Ascending aorta (tissue), 2 donors: ENCODE measurements at regions of chr12 and their contacts with region 1.

Region 1: DNA sequence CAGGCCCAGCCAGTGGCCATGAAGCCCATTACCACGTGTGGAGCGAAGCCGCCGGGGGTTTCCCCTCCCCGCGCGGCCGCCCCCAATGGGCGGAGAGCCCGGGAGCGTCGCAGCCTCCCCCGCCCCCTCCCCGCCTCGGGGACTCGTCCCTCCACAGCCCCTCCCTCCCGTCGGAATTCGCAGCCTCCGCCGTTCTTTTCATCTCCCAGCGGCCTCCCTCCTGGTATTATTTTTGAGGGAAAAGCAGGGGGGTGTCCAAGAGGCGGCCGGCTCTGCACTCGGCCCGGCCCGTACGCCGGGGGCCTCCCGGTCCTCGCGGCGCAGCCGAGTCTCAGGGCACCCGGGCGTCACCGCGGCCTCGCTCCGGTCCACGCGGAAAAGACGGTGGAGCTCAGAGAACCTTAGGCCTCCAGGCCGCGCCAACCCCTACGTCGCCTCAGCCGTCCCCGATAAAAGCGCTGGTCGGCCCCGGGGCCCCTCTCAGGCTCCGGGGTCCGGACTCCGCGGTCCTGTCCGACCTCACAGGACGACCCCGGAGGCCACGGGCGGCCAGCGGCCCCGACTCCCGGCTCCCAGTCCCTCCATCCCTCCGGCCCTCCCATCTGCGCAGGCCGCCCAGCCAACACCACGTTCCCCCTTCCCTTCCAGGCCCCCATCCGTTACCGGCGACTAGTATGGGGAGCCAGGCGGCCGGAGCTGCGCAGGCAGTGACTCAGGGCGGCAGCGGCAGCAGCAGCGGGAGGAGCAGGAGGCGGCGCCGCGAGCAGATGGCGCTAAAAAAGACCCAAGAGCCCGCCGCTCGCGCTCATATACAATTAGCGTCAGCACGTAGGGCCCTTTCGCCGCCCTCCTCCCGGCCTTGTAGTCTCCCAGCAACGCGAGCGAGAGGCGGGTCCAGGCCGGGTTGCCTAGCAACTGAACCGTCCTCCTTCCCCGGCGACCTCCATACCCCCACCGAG is at the start of gene NAP1L1:
- DNase-seq: peak; percentile 92 to 99
- H3K4me3 ChIP-seq: peak within 1 kb of the TSS; percentile 71 to 77
- H3K27ac ChIP-seq: peak within 1 kb of the TSS; percentile 99
- H3K4me1 ChIP-seq: peaks cover 7 to 18% of the 10 kb centered on the region in 2 donors
- H3K27me3 ChIP-seq: no peaks in the 10 kb centered on the region
- CTCF ChIP-seq: no peak
- total RNA-seq, gene NAP1L1: 116 TPM

Region 2: GRCh38 chr12:75511116-75512048 is 572.8 kb before region 1 on chr12 and contains the start of gene KRR1:
- intact Hi-C with region 1: loop called (anchors 5 kb)
- DNase-seq: peak; percentile 68 to 96
- H3K4me3 ChIP-seq: peak within 1 kb of the TSS; percentile 87 to 90
- H3K27ac ChIP-seq: peak within 1 kb of the TSS; percentile 73 to 81
- H3K4me1 ChIP-seq: peaks cover 3 to 12% of the 10 kb centered on the region in 2 donors
- H3K27me3 ChIP-seq: no peaks in the 10 kb centered on the region
- CTCF ChIP-seq: no peak
- total RNA-seq, gene KRR1: 23.9 TPM

Region 3: GRCh38 chr12:76031537-76032073 is 52.6 kb before region 1 on chr12 and contains the start of gene PHLDA1:
- intact Hi-C with region 1: loop called (anchors 1 kb)
- DNase-seq: peak; percentile 69 to 97
- H3K4me3 ChIP-seq: peak within 1 kb of the TSS; percentile 58 to 80
- H3K27ac ChIP-seq: peak within 1 kb of the TSS; percentile 95
- H3K4me1 ChIP-seq: no peaks in the 10 kb centered on the region
- H3K27me3 ChIP-seq: no peaks in the 10 kb centered on the region
- CTCF ChIP-seq: peak; percentile 64 to 74 (median 69)
- total RNA-seq, gene PHLDA1: 11.8 TPM

Region 4: DNA sequence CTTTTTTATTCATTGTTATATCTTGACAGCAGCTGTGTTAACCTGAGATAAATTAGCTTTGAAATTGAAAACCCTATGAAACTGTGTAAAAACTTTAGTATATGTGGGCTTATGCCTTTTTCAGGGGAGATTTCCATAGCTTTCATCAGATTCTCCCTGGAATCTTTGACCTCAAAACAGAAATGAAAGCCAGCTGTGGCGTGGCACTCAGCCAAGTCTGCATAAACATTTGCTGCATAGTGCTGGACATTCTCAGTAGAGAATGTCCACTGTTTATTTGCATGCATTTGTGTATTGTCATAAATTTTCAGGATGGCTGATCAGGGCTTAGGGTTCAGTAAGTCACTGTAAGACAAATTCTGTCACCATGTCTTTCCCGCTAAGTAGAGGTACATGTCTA is 115.6 kb after region 1 on chr12:
- intact Hi-C with region 1: no loop called
- DNase-seq: no peak
- H3K4me3 ChIP-seq: no peak overlapping the region
- H3K27ac ChIP-seq: no peak overlapping the region
- H3K4me1 ChIP-seq: no peaks in the 10 kb centered on the region
- H3K27me3 ChIP-seq: no peaks in the 10 kb centered on the region
- CTCF ChIP-seq: no peak

Region 5: DNA sequence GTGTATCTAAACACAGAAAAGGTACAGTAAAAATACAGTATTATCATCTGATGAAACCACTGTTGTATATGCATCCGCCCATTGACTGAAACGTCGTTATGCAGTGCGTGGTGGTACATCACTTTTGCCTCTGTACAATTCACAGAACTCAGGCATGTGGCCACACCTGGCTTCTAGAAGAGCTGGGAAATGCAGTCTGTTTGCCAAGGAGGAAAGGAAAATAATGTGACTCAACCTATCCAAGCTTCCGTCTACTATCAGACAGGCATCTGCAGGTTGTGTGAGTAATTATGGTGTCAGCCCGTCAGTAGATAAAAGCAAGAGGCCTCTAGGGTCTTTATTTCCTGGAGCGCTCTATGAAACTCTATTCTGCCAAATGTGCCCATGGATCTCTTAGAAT is 152.4 kb after region 1 on chr12:
- intact Hi-C with region 1: no loop called
- DNase-seq: no peak
- H3K4me3 ChIP-seq: no peak overlapping the region
- H3K27ac ChIP-seq: no peak overlapping the region
- H3K4me1 ChIP-seq: no peaks in the 10 kb centered on the region
- H3K27me3 ChIP-seq: no peaks in the 10 kb centered on the region
- CTCF ChIP-seq: no peak

Region 6: GRCh38 chr12:76374386-76375020 is 290.3 kb after region 1 on chr12:
- intact Hi-C with region 1: no loop called
- DNase-seq: no peak
- H3K4me3 ChIP-seq: no peak overlapping the region
- H3K27ac ChIP-seq: no peak overlapping the region
- H3K4me1 ChIP-seq: no peaks in the 10 kb centered on the region
- H3K27me3 ChIP-seq: no peaks in the 10 kb centered on the region
- CTCF ChIP-seq: no peak

Region 7: GRCh38 chr12:76455582-76456345 is 371.6 kb after region 1 on chr12:
- intact Hi-C with region 1: loop called (anchors 10 kb)
- DNase-seq: no peak
- H3K4me3 ChIP-seq: no peak overlapping the region
- H3K27ac ChIP-seq: peak overlapping the region in 1 of 2 donors; percentile 29
- H3K4me1 ChIP-seq: no peaks in the 10 kb centered on the region
- H3K27me3 ChIP-seq: no peaks in the 10 kb centered on the region
- CTCF ChIP-seq: peak in 2 of 3 experiments; percentile 40 to 63

Region 8: GRCh38 chr12:76763743-76764675 is 679.8 kb after region 1 on chr12 and contains the start of gene ZDHHC17:
- intact Hi-C with region 1: loop called (anchors 2 kb)
- DNase-seq: peak; percentile 66 to 93
- H3K4me3 ChIP-seq: peak within 1 kb of the TSS; percentile 67 to 87
- H3K27ac ChIP-seq: peak within 1 kb of the TSS; percentile 95 to 96
- H3K4me1 ChIP-seq: peaks cover 0 to 3% of the 10 kb centered on the region in 2 donors
- H3K27me3 ChIP-seq: no peaks in the 10 kb centered on the region
- CTCF ChIP-seq: no peak
- total RNA-seq, gene ZDHHC17: 24.3 TPM